ENCODE measurements at regions of chr20 and their contacts with region 1.

Region 1: DNA sequence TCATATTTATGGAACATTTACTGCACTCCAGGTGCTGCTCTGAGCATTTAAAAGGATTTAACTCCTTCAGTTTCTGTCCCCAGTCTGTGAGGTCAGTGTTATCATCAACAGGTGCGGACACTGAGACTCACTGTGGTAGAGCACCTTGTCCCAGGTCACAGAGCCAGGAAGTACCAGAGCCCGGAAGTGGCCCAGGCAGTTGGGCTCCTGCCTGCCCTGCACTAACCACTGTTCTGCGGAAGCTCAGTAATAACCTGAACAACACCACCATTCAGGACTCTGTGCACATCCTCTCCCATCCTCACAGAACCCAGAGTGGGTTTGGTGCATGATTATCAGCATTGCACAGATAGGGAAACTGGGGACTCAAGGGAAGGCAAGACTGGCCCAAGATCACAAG is 16.8 kb upstream of the SIRPG start:
- DNase-seq: peak; percentile 75
- H3K4me3 Mint-ChIP-seq: peak overlapping the region; percentile 36
- H3K27ac Mint-ChIP-seq: peak overlapping the region; percentile 91
- H3K4me1 Mint-ChIP-seq: peaks cover 68% of the 10 kb centered on the region
- H3K27me3 Mint-ChIP-seq: no peaks in the 10 kb centered on the region

Region 2: GRCh38 chr20:1619861-1620444 is 54.4 kb before region 1 on chr20 and contains the start of gene SIRPB1:
- CTCF ChIA-PET with region 1: no interaction called
- POLR2A ChIA-PET with region 1: no interaction called
- DNase-seq: peak; percentile 46
- H3K4me3 Mint-ChIP-seq: no peak within 1 kb of the TSS
- H3K27ac Mint-ChIP-seq: no peak within 1 kb of the TSS
- H3K4me1 Mint-ChIP-seq: peaks cover 57% of the 10 kb centered on the region
- H3K27me3 Mint-ChIP-seq: no peaks in the 10 kb centered on the region
- total RNA-seq, gene SIRPB1: 5.1 to 7.1 TPM

Region 3: DNA sequence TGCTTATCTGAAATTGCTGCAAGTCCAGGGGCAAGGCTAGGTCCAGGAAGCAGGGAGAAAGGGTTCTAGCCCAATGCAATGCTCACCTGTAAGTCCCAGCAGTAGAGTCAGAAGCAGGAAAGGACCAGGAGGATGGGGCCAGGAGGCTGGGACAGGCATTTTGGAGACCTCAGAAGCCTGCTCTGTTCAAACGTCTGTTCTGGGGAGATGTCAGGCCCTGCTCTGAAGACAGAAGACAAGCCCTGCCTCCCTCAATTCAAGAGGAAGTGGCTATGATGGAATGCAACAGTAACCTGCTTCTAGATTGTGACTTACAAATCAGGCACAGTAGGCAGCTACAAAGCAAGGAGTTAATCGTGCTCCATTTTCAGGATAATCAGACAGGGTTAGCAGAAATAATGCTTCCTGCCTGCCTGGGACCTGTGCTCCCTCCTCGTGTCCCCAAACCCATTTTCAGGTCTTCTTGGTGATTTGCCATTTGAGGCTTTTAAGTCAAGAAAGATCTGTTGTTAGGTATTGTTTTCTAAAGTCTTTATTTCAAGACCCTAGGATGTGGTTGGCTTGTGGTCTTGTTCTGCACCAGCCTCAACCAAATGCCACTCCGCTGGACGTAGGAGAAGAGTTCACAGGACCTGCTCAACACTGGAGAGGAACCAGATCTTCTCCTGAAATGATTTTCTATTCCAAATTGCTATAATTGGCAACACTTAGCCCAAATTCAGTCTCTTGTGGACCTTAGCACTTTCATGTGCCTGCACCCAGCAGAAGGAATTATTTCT is 16.6 kb before region 1 on chr20 and contains the start of gene SIRPG:
- CTCF ChIA-PET with region 1: no interaction called
- POLR2A ChIA-PET with region 1: interaction called, 17 read pairs
- DNase-seq: peak; percentile 70
- H3K4me3 Mint-ChIP-seq: peak within 1 kb of the TSS; percentile 88
- H3K27ac Mint-ChIP-seq: peak within 1 kb of the TSS; percentile 95
- H3K4me1 Mint-ChIP-seq: peaks cover 88% of the 10 kb centered on the region
- H3K27me3 Mint-ChIP-seq: no peaks in the 10 kb centered on the region
- total RNA-seq, gene SIRPG: 109 to 111 TPM

Region 4: GRCh38 chr20:1663917-1664316 is 10.4 kb before region 1 on chr20:
- CTCF ChIA-PET with region 1: interaction called, 7 read pairs
- POLR2A ChIA-PET with region 1: interaction called, 35 read pairs
- DNase-seq: no peak
- H3K4me3 Mint-ChIP-seq: peak overlapping the region; percentile 15
- H3K27ac Mint-ChIP-seq: peak overlapping the region; percentile 77
- H3K4me1 Mint-ChIP-seq: peaks cover 88% of the 10 kb centered on the region
- H3K27me3 Mint-ChIP-seq: no peaks in the 10 kb centered on the region

Measured in activated CD4-positive, alpha-beta memory T cell treated with anti-CD3 and anti-CD28 coated beads, Interleukin-2, amount 10 ng/mL, durations not matched to agents 7 days and 5 days (primary cell).